Left lung (tissue), 14 donors: ENCODE measurements at regions of chr17 and their contacts with region 1.

Region 1: GRCh38 chr17:65556014-65556909 is 5.2 kb downstream of the AXIN2 start:
- DNase-seq: peak; percentile 77 to 92 (median 88)
- ATAC-seq: peak; percentile 55
- H3K4me3 ChIP-seq: no peak overlapping the region
- H3K27ac ChIP-seq: peak overlapping the region; percentile 62 to 94
- H3K4me1 ChIP-seq: peaks cover 27 to 35% of the 10 kb centered on the region in 2 donors
- H3K27me3 ChIP-seq: peaks cover 0 to 47% of the 10 kb centered on the region in 2 donors
- CTCF ChIP-seq: peak; percentile 77 to 82

Region 2: DNA sequence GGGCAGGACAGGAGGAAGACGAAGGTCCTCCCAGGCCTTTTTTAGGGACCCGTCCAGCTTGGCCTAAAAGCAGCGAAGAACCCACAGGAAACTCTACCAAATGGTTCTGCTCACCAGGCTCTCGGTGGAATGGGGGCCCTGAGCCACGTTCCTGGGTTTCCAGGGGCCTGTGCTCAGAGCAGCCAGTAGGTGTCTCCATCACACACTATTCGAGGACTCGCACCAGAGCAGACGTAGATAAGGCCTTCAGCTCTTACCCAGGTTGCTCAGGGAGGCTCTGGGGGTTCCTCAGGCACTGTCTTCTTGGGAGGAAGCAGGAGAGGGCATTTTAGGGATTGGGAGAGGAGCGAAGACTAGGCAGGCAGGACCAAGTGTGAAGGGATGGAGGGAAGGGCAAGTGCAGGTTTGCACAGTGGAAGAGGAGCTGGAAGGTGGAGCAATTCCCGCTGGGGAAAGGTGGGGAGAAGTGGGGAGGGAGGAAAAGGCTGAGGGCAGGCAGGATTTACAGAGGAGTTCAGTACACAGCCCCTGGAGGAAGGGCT is 262.0 kb before region 1 on chr17:
- intact Hi-C with region 1: loop called (anchors 5 to 10 kb)
- DNase-seq: peak in 3 of 4 donors; percentile 49 to 80 (median 59)
- ATAC-seq: peak; percentile 98
- H3K4me3 ChIP-seq: no peak overlapping the region
- H3K27ac ChIP-seq: no peak overlapping the region
- H3K4me1 ChIP-seq: peaks cover 0 to 4% of the 10 kb centered on the region in 2 donors
- H3K27me3 ChIP-seq: no peaks in the 10 kb centered on the region
- CTCF ChIP-seq: peak; percentile 73 to 79

Region 3: DNA sequence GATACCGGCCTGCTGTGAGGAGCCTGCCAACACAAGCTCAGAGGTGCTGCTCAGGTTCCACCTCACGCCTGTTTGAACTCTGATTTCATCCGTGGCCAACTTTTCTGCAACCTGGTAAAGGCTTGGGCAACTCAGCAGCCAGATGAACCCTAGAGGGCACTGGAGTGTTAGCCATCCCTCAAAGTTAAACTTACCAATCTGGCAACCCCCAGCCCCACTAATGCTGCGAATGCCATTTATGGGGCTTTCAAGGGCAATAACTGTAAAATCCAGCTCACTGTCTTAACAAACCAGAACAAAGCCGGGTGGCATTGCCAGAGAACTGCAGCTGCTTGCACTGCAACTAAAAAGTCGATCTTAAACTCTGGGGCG is 100.3 kb before region 1 on chr17:
- intact Hi-C with region 1: loop called in 1 of 2 experiments (anchors 10 kb)
- DNase-seq: peak in 1 of 4 donors; percentile 58
- ATAC-seq: peak; percentile 82
- H3K4me3 ChIP-seq: no peak overlapping the region
- H3K27ac ChIP-seq: no peak overlapping the region
- H3K4me1 ChIP-seq: peaks cover 0 to 9% of the 10 kb centered on the region in 2 donors
- H3K27me3 ChIP-seq: no peaks in the 10 kb centered on the region
- CTCF ChIP-seq: peak in 1 of 2 donors; percentile 21

Region 4: DNA sequence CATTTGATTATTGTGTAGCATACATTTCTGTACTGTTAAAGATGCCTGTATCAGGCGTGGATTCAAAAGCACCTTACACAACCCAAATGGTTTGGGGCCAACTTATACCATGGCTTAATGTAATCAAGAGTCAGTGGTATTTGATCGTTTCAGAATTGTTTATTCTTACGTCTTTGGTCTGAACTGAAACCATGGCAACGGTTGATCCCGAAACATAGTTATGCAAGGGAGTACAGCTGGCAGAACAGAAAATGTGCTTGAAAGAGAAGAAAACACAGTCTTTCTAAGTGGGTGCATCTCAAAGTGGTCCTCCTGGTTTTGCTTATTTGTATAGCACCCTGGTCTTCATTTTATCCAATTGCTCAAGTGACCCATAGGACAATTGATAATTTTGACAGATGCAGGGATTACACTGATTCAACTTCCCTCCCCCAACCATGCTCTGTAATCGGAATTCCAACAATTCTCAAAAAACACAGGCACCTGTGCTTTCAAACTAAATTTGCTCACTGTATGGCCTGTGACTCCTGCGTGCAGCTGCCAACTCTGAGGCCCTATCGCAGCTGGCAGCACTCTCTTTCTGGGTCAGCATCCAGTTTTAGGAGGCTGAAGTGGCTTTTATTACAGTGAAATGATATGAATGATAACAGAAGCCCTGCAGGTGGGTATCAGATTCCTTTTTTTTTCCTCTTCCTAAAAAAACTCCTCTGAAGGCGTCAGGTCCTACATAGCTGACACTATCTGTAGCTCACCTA is 82.1 kb after region 1 on chr17:
- intact Hi-C with region 1: no loop called
- DNase-seq: peak in 2 of 4 donors; percentile 80 to 86
- ATAC-seq: peak; percentile 27
- H3K4me3 ChIP-seq: no peak overlapping the region
- H3K27ac ChIP-seq: no peak overlapping the region
- H3K4me1 ChIP-seq: peaks cover under 1 to 5% of the 10 kb centered on the region in 2 donors
- H3K27me3 ChIP-seq: no peaks in the 10 kb centered on the region
- CTCF ChIP-seq: no peak